ENCODE measurements at regions of chr20 and their contacts with region 1.

Region 1: GRCh38 chr20:31723319-31724078 is 831 bp upstream of the BCL2L1 start:
- DNase-seq: peak; percentile 99
- ATAC-seq: peak; percentile 92
- H3K4me3 Mint-ChIP-seq: peak overlapping the region; percentile 90
- H3K27ac Mint-ChIP-seq: peak overlapping the region; percentile 94
- H3K4me1 Mint-ChIP-seq: peaks cover 31% of the 10 kb centered on the region
- H3K27me3 Mint-ChIP-seq: no peaks in the 10 kb centered on the region

Region 2: GRCh38 chr20:31572701-31573554 is 150.6 kb before region 1 on chr20:
- CTCF ChIA-PET with region 1: interaction called, 24 read pairs
- POLR2A ChIA-PET with region 1: interaction called, 5 read pairs
- DNase-seq: peak; percentile 91
- ATAC-seq: peak; percentile 92
- H3K4me3 Mint-ChIP-seq: peak overlapping the region; percentile 85
- H3K27ac Mint-ChIP-seq: peak overlapping the region; percentile 88
- H3K4me1 Mint-ChIP-seq: peaks cover 27% of the 10 kb centered on the region
- H3K27me3 Mint-ChIP-seq: peaks cover under 1% of the 10 kb centered on the region

Region 3: GRCh38 chr20:31652917-31653396 is 70.5 kb before region 1 on chr20:
- CTCF ChIA-PET with region 1: interaction called, 27 read pairs
- POLR2A ChIA-PET with region 1: interaction called, 3 read pairs
- DNase-seq: no peak
- ATAC-seq: no peak
- H3K4me3 Mint-ChIP-seq: no peak overlapping the region
- H3K27ac Mint-ChIP-seq: no peak overlapping the region
- H3K4me1 Mint-ChIP-seq: no peaks in the 10 kb centered on the region
- H3K27me3 Mint-ChIP-seq: peaks cover 28% of the 10 kb centered on the region

Region 4: GRCh38 chr20:31684153-31685015 is 39.1 kb before region 1 on chr20:
- CTCF ChIA-PET with region 1: interaction called, 186 read pairs
- POLR2A ChIA-PET with region 1: interaction called, 193 read pairs
- DNase-seq: no peak
- ATAC-seq: peak; percentile 67
- H3K4me3 Mint-ChIP-seq: no peak overlapping the region
- H3K27ac Mint-ChIP-seq: peak overlapping the region; percentile 85
- H3K4me1 Mint-ChIP-seq: peaks cover 82% of the 10 kb centered on the region
- H3K27me3 Mint-ChIP-seq: no peaks in the 10 kb centered on the region

Region 5: GRCh38 chr20:31704225-31705119 is 19.0 kb before region 1 on chr20:
- CTCF ChIA-PET with region 1: interaction called, 54 read pairs
- POLR2A ChIA-PET with region 1: interaction called, 44 read pairs
- DNase-seq: no peak
- ATAC-seq: no peak
- H3K4me3 Mint-ChIP-seq: no peak overlapping the region
- H3K27ac Mint-ChIP-seq: no peak overlapping the region
- H3K4me1 Mint-ChIP-seq: peaks cover 61% of the 10 kb centered on the region
- H3K27me3 Mint-ChIP-seq: no peaks in the 10 kb centered on the region

Region 6: DNA sequence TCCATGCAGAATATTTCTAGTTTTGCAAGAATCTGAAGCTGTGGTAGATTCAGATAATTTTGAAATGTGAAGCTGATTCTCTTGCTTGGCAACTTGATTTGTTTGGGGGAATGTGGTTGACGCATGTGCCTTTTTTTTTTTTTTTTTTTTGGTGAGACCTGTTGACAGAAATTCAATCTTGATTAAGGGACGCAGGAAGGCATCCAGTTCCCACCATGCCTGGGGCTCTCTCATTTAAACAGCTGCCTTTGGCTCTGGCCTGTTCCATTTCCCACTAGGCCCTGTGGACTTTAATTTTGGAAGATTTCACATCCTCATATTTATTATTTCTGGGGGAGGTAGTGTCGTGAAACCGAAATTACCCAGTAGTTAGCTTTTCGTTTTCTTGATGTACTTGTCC is 24.1 kb after region 1 on chr20:
- CTCF ChIA-PET with region 1: interaction called, 12 read pairs
- POLR2A ChIA-PET with region 1: no interaction called
- DNase-seq: no peak
- ATAC-seq: no peak
- H3K4me3 Mint-ChIP-seq: no peak overlapping the region
- H3K27ac Mint-ChIP-seq: no peak overlapping the region
- H3K4me1 Mint-ChIP-seq: peaks cover 30% of the 10 kb centered on the region
- H3K27me3 Mint-ChIP-seq: no peaks in the 10 kb centered on the region